Activated CD4-positive, alpha-beta memory T cell treated with anti-CD3 and anti-CD28 coated beads, Interleukin-2, amount 10 ng/mL, durations not matched to agents 7 days and 5 days (primary cell): ENCODE measurements at regions of chr10 and their contacts with region 1.

Region 1: DNA sequence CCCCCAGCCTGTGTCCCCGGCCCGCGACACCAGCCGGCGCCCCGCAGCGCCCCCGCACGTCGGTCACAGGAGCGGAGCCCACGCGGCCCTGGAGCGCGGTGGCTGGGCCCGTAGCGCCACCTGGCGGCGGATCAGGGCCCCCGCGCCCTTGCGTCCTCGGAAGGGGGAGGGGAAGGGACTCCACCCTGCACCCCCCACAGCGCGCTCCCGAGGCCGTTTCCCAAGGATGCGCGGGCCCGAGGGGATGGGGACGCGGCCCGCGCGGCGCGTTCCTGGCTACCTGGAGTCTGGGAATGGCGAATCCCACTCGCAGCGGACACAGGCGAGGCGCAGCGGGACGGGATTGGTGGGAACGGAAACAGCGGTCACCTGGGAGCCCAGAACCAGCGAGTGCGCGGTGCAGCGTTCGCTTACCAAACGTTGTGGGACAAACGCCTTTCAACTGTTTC is 23.8 kb upstream of the MKI67 start:
- DNase-seq: peak; percentile 80
- H3K4me3 Mint-ChIP-seq: peak overlapping the region; percentile 67
- H3K27ac Mint-ChIP-seq: no peak overlapping the region
- H3K4me1 Mint-ChIP-seq: peaks cover 26% of the 10 kb centered on the region
- H3K27me3 Mint-ChIP-seq: peaks cover 34% of the 10 kb centered on the region

Region 2: DNA sequence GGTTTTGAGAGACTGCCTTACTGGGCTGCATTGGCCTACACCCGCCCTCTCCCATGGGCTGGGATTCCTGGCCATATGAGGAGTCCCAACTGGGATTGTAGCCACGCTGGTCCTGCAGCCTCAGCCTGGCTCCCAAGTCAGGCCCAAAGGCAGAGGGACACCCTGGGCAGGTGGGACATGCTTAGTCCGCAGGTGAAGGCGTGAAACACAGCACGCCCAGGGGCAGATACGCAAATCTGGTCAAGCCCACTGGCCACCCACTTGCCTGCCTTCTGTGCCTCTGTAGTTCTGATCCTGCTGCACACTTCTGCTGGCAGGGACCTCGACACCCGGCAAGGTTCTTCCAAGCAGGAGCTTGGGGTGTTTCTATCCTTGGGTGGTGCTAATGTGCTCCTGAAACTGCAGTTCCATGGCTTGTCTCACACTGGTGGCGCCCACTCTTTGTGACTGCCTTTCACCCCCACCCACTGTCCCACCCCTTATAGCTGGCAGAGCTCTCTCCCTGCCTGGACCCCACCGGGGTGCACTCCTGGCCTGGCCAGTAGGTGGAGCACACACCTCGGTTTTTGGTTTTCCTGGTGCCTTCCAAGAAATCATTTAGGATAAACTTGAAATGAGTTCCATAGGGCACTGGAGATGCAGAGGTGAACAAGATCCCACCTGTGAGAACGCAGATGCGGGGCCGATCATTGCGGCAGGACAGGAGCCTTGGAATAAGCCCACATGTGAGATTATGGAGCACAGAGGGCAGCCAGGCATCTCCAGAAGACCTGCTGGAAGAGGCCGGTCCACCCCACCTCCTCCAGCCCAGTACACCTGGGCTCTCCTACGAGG is 71.7 kb before region 1 on chr10:
- CTCF ChIA-PET with region 1: interaction called, 34 read pairs
- POLR2A ChIA-PET with region 1: interaction called, 3 read pairs
- DNase-seq: peak; percentile 42
- H3K4me3 Mint-ChIP-seq: no peak overlapping the region
- H3K27ac Mint-ChIP-seq: no peak overlapping the region
- H3K4me1 Mint-ChIP-seq: peaks cover 17% of the 10 kb centered on the region
- H3K27me3 Mint-ChIP-seq: no peaks in the 10 kb centered on the region

Region 3: DNA sequence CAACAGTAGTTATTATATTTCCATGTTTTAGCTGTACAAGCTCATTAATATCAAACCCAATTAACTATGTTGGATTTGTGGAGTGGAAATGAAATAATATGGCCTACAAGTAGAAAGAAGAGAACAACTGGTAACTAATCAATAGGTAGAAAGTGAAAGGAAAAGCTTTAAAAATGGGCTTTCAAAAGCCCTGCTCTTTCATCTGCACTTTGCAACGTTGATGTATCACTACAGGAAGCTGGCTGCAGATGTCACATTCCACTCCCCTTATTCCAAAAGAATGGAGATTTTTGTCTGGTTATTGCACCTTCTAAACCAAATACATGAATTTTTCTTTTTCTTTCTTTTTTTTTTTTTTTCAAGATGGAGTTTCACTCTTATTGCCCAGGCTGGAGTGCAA is 12.2 kb before region 1 on chr10:
- CTCF ChIA-PET with region 1: interaction called, 14 read pairs
- POLR2A ChIA-PET with region 1: no interaction called
- DNase-seq: no peak
- H3K4me3 Mint-ChIP-seq: no peak overlapping the region
- H3K27ac Mint-ChIP-seq: no peak overlapping the region
- H3K4me1 Mint-ChIP-seq: peaks cover 4% of the 10 kb centered on the region
- H3K27me3 Mint-ChIP-seq: peaks cover 12% of the 10 kb centered on the region

Region 4: GRCh38 chr10:128167926-128168520 is 18.0 kb after region 1 on chr10:
- CTCF ChIA-PET with region 1: interaction called, 10 read pairs
- POLR2A ChIA-PET with region 1: no interaction called
- DNase-seq: no peak
- H3K4me3 Mint-ChIP-seq: no peak overlapping the region
- H3K27ac Mint-ChIP-seq: no peak overlapping the region
- H3K4me1 Mint-ChIP-seq: no peaks in the 10 kb centered on the region
- H3K27me3 Mint-ChIP-seq: peaks cover 32% of the 10 kb centered on the region